ENCODE measurements at regions of chr17 and their contacts with region 1.

Region 1: DNA sequence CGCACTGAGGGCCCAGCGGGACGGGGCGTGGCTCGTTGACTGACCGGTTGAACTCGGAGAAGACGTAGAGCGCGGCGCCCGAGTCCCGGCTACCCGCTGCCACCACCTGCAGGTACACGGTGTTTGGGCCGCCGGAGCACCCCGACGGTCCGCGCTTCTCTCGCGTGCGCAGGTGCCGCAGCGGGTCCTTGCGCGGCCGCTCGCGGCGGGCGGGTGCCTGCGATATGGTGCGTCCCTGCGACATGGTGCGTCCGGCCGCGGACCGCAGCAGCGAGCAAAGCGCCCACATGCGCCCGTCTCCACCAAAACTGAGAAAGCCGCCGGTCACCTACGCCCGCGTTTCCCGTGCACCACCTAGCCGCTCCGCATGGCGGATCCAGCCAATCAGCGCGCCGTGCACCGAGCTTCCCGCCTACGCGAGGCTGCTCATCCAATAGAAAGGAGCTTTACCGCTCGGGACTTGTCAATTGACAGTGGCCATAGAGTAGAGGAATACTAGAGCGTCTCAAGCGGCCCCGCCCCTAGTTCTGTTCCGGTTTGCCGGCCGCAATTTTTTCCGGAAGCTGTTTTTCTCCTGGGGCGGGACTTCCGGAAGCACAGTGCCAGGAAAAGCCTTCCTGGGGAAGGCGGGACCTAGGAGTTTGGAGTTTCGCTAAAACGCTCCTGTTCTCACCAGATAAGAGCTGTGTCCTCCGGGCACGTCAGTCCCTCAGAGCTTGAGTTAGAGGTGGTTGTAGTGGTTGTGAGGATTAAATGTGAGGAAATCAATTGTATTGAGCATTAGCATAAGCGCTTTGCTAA is at the start of gene ELAC2:
- DNase-seq: peak; percentile 99
- ATAC-seq: peak; percentile 99
- H3K4me3 ChIP-seq: peak within 1 kb of the TSS; percentile 68
- H3K27ac ChIP-seq: peak within 1 kb of the TSS; percentile 58
- H3K4me1 ChIP-seq: no peaks in the 10 kb centered on the region
- H3K27me3 ChIP-seq: no peaks in the 10 kb centered on the region
- CTCF ChIP-seq: no peak
- POLR2A ChIP-seq: peak; percentile 86
- RAD21 ChIP-seq: no peak
- total RNA-seq, gene ELAC2: 70.8 and 80.7 TPM in 2 replicates

Region 2: DNA sequence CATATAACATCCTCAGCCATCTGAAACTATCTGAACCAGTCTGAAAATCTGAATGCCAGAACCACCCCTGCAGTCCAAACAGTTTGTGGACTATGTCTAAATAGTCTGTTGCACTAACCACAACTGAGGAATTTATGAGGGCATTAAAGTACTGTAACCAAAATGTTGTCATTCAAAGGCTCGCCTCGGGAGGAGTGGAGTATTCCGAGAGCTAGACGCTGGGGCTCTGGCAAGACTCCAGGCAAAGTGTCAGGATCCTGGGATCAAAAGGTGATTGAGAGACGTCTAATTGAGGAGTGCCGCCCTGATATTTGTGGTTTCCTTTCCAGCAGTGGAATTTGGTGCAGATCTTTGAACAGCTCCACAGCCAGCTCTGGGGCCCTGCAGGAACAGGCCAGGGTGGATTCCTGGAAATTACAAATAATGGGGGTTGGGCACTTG is 495.1 kb before region 1 on chr17:
- CTCF ChIA-PET with region 1: no interaction called
- POLR2A ChIA-PET with region 1: no interaction called
- dilution Hi-C with region 1: no loop called
- in situ Hi-C with region 1: loop called (anchors 25 kb)
- intact Hi-C with region 1: no loop called
- DNase-seq: peak; percentile 69
- ATAC-seq: peak; percentile 87
- H3K4me3 ChIP-seq: no peak overlapping the region
- H3K27ac ChIP-seq: peak overlapping the region; percentile 17; the same call in 1 of the 2 replicates
- H3K4me1 ChIP-seq: peaks cover 6% of the 10 kb centered on the region; the same call in 1 of the 2 replicates
- H3K27me3 ChIP-seq: no peaks in the 10 kb centered on the region
- CTCF ChIP-seq: no peak
- POLR2A ChIP-seq: no peak
- RAD21 ChIP-seq: no peak

Region 3: DNA sequence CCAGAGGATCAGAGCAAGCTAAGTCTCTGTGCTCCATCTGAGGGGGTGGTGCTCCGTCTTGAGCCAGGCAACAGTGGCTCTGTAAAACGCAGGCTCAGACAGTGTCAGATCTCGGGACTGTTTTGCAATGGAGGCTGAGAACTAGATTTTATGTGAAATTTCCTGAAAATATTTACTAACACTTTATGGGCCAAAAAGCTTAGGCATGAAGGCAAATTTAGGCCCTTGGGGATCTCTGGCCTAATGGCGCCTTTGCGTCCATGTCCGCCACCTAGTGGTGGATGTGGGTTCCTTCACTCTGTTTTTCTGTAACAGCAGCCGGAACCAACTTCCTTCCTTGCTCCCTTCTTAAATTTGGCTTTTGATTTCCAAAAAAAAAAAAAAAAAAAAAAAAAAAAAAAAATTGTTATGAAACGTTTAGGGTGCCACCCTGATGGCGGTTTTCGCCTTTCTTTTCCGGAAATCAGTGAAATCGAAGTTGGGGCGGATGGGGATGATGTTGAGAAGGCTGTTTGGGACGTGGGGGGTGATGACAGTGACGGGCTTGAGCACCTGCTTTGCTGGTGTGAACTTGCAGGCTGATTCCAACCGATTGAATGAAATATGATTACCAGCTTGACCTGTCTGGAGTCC is 14.0 kb after region 1 on chr17:
- CTCF ChIA-PET with region 1: interaction called, 16 read pairs
- POLR2A ChIA-PET with region 1: no interaction called
- dilution Hi-C with region 1: no loop called
- in situ Hi-C with region 1: no loop called
- intact Hi-C with region 1: no loop called
- DNase-seq: peak; percentile 47
- ATAC-seq: peak; percentile 75
- H3K4me3 ChIP-seq: no peak overlapping the region
- H3K27ac ChIP-seq: no peak overlapping the region
- H3K4me1 ChIP-seq: no peaks in the 10 kb centered on the region
- H3K27me3 ChIP-seq: peaks cover 10% of the 10 kb centered on the region
- CTCF ChIP-seq: peak; percentile 68
- POLR2A ChIP-seq: no peak
- RAD21 ChIP-seq: peak; percentile 20; the same call in 1 of the 2 replicates